Transverse colon (tissue), 4 donors: ENCODE measurements at regions of chr16 and their contacts with region 1.

Region 1: GRCh38 chr16:71894921-71895678 is at the start of gene IST1:
- DNase-seq: peak; percentile 98
- H3K4me3 ChIP-seq: peak within 1 kb of the TSS; percentile 88 to 96 (median 92)
- H3K27ac ChIP-seq: peak within 1 kb of the TSS; percentile 98 to 99 (median 98)
- H3K4me1 ChIP-seq: peaks cover 12 to 50% (median 38%) of the 10 kb centered on the region in 4 donors
- H3K27me3 ChIP-seq: no peaks in the 10 kb centered on the region
- CTCF ChIP-seq: peak in 1 of 5 experiments; percentile 9
- EP300 ChIP-seq: no peak
- POLR2A ChIP-seq: peak; percentile 95
- total RNA-seq, gene IST1: 200 to 303 (median 257) TPM

Region 2: DNA sequence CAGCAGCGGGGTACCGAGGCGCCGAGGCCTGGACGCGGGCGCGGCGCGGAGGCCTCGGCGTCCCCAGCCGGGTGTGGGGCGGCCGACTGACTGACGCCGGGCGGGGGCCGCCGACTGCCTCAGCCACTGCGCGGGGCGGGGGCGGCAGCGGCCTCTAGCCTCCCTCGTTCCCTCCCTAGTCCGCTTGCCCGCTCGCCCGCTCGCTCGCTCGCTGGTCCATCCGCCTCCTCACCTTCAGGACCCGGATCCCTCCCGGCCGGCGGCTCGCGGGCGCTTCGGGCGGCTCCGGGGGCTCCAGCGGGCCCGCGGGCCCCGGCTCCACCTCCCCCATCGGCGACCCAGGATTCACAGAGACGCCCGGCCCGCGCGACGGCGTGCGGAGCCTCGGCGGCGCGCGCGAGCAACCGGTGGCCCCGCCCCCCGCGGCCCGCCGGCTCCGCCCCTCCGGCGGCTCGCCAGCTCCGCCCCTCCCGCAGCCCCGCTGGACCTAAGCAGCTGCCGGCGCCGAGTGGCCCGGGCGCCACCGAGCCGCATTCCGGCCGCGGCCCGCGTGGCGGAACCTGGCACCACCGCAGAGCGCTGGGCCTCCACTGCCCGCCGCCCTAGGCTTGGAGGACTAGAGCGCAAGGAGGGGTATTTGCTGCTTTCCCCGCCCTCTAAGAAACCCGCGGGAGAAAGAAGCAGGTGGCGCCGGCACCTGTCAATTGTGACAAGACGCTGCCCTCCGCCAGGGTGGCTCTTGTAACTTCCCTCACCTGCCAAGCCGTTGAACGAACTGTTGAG is 171.4 kb before region 1 on chr16:
- in situ Hi-C with region 1: no loop called
- intact Hi-C with region 1: loop called (anchors 10 kb)
- DNase-seq: peak; percentile 85
- H3K4me3 ChIP-seq: peak overlapping the region; percentile 77 to 90 (median 88)
- H3K27ac ChIP-seq: peak overlapping the region; percentile 93 to 99 (median 98)
- H3K4me1 ChIP-seq: peaks cover 24 to 67% (median 42%) of the 10 kb centered on the region in 4 donors
- H3K27me3 ChIP-seq: no peaks in the 10 kb centered on the region
- CTCF ChIP-seq: peak in 3 of 5 experiments; percentile 12 to 54 (median 44)
- EP300 ChIP-seq: no peak
- POLR2A ChIP-seq: peak; percentile 51

Region 3: GRCh38 chr16:72317446-72317845 is 422.3 kb after region 1 on chr16:
- in situ Hi-C with region 1: no loop called
- intact Hi-C with region 1: no loop called
- DNase-seq: no peak
- H3K4me3 ChIP-seq: no peak overlapping the region
- H3K27ac ChIP-seq: peak overlapping the region in 1 of 4 donors; percentile 20
- H3K4me1 ChIP-seq: no peaks in the 10 kb centered on the region
- H3K27me3 ChIP-seq: no peaks in the 10 kb centered on the region
- CTCF ChIP-seq: no peak
- EP300 ChIP-seq: no peak
- POLR2A ChIP-seq: no peak